T-cell (primary cell): ENCODE measurements at regions of chr5 and their contacts with region 1.

Region 1: GRCh38 chr5:147152086-147152485 is 82.7 kb upstream of the STK32A start:
- DNase-seq: no peak
- ATAC-seq: no peak
- H3K4me3 ChIP-seq: no peak overlapping the region
- H3K4me3 Mint-ChIP-seq: no peak overlapping the region
- H3K27ac ChIP-seq: no peak overlapping the region
- H3K27ac Mint-ChIP-seq: no peak overlapping the region
- H3K4me1 ChIP-seq: no peaks in the 10 kb centered on the region
- H3K4me1 Mint-ChIP-seq: no peaks in the 10 kb centered on the region
- H3K27me3 ChIP-seq: no peaks in the 10 kb centered on the region
- H3K27me3 Mint-ChIP-seq: peaks cover 0 to 4% of the 10 kb centered on the region in 2 donors

Region 2: DNA sequence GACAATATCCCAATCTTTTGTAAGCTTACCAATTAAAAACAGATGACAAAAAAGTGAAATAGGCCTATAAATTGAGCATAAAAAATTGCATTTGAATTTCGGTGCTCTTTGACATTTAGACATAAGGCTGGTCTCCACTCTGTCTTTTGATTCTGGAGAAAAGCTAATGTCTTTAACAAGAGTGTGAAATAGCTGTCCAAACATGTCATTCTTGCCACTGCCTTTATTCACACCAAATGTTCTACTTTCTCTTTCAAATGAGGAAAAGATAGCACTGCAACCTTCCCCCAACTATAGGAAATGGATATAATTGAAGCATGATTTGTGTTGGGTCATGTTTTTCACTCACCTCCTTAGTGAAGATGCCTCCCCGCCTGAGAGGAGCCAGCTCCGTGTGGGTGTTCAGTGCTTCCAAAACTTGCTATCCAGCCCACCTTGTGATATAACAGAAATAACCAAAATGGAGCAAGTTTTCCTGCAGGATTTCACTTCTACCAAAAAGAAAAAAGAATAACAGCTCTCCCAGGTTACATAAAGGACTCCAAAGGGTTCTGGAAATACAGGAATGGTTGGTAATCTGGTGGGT is 27.6 kb after region 1 on chr5:
- CTCF ChIA-PET with region 1: interaction called in 1 of 2 experiments, 10 read pairs
- POLR2A ChIA-PET with region 1: no interaction called
- DNase-seq: no peak
- ATAC-seq: no peak
- H3K4me3 ChIP-seq: no peak overlapping the region
- H3K4me3 Mint-ChIP-seq: no peak overlapping the region
- H3K27ac ChIP-seq: no peak overlapping the region
- H3K27ac Mint-ChIP-seq: no peak overlapping the region
- H3K4me1 ChIP-seq: no peaks in the 10 kb centered on the region
- H3K4me1 Mint-ChIP-seq: no peaks in the 10 kb centered on the region
- H3K27me3 ChIP-seq: peaks cover 0 to under 1% of the 10 kb centered on the region in 2 experiments
- H3K27me3 Mint-ChIP-seq: no peaks in the 10 kb centered on the region

Region 3: DNA sequence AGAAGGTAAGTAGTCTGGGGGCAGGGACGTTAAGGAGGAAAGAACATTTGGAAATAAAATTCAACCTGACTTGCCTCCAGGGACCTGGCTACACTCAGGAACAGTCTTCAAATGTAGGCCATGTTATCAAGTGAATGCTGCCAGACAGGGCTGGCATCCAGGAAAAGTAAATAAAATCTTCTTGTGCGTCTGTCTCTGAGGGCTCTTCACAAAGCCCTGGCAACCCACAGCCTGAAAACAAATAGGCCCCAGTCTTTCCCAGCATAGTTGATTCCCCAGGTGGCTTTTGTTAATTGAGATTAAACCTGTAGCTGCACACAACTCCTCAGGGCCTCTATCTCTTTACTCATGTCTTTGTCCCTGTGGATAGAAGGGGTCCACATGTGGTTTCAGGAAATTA is 138.2 kb after region 1 on chr5:
- CTCF ChIA-PET with region 1: no interaction called
- POLR2A ChIA-PET with region 1: no interaction called
- DNase-seq: no peak
- ATAC-seq: no peak
- H3K4me3 ChIP-seq: no peak overlapping the region
- H3K4me3 Mint-ChIP-seq: no peak overlapping the region
- H3K27ac ChIP-seq: no peak overlapping the region
- H3K27ac Mint-ChIP-seq: no peak overlapping the region
- H3K4me1 ChIP-seq: no peaks in the 10 kb centered on the region
- H3K4me1 Mint-ChIP-seq: no peaks in the 10 kb centered on the region
- H3K27me3 ChIP-seq: no peaks in the 10 kb centered on the region
- H3K27me3 Mint-ChIP-seq: no peaks in the 10 kb centered on the region